MCF 10A (cell line): ENCODE measurements at regions of chr14 and their contacts with region 1.

Region 1: GRCh38 chr14:81170104-81170828 is 50.5 kb downstream of the GTF2A1 start:
- DNase-seq: peak; percentile 89
- H3K4me3 Mint-ChIP-seq: peak overlapping the region; percentile 80
- H3K27ac Mint-ChIP-seq: peak overlapping the region; percentile 78
- H3K4me1 Mint-ChIP-seq: peaks cover 15% of the 10 kb centered on the region
- H3K27me3 Mint-ChIP-seq: no peaks in the 10 kb centered on the region
- CTCF ChIP-seq: peak; percentile 66

Region 2: GRCh38 chr14:80954687-80955299 is 215.5 kb before region 1 on chr14:
- CTCF ChIA-PET with region 1: interaction called, 11 read pairs
- POLR2A ChIA-PET with region 1: no interaction called
- intact Hi-C with region 1: loop called (anchors 2 kb)
- DNase-seq: peak; percentile 75
- H3K4me3 Mint-ChIP-seq: peak overlapping the region; percentile 70
- H3K27ac Mint-ChIP-seq: no peak overlapping the region
- H3K4me1 Mint-ChIP-seq: no peaks in the 10 kb centered on the region
- H3K27me3 Mint-ChIP-seq: peaks cover 76% of the 10 kb centered on the region
- CTCF ChIP-seq: peak; percentile 76

Region 3: GRCh38 chr14:80987235-80988032 is 182.8 kb before region 1 on chr14:
- CTCF ChIA-PET with region 1: interaction called, 37 read pairs
- POLR2A ChIA-PET with region 1: interaction called, 6 read pairs
- intact Hi-C with region 1: no loop called
- DNase-seq: peak; percentile 83
- H3K4me3 Mint-ChIP-seq: no peak overlapping the region
- H3K27ac Mint-ChIP-seq: no peak overlapping the region
- H3K4me1 Mint-ChIP-seq: no peaks in the 10 kb centered on the region
- H3K27me3 Mint-ChIP-seq: peaks cover 21% of the 10 kb centered on the region
- CTCF ChIP-seq: peak; percentile 95

Region 4: DNA sequence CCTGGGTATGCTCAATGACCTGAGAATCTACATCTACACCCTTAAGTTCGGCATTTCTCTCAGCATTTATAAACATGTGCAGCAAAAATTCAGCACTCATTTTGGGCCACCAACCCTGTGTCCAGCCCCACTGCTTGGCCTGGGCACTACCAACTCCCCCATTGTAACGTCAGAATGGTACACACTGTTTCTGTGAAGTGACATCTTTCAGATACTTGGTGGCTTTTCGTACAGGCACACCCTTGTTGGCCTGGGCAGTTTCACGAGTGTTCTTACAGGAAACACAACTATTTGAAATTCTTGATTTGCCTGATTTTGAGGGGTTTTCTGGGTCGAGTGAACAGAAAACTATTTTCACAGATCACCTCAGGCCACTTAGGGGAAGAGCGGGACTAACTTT is 168.8 kb before region 1 on chr14:
- CTCF ChIA-PET with region 1: interaction called, 76 read pairs
- POLR2A ChIA-PET with region 1: interaction called, 17 read pairs
- intact Hi-C with region 1: loop called (anchors 1 kb)
- DNase-seq: no peak
- H3K4me3 Mint-ChIP-seq: no peak overlapping the region
- H3K27ac Mint-ChIP-seq: no peak overlapping the region
- H3K4me1 Mint-ChIP-seq: no peaks in the 10 kb centered on the region
- H3K27me3 Mint-ChIP-seq: peaks cover 43% of the 10 kb centered on the region
- CTCF ChIP-seq: no peak

Region 5: GRCh38 chr14:81157431-81157830 is 12.8 kb before region 1 on chr14:
- CTCF ChIA-PET with region 1: interaction called, 46 read pairs
- POLR2A ChIA-PET with region 1: no interaction called
- intact Hi-C with region 1: no loop called
- DNase-seq: no peak
- H3K4me3 Mint-ChIP-seq: no peak overlapping the region
- H3K27ac Mint-ChIP-seq: no peak overlapping the region
- H3K4me1 Mint-ChIP-seq: no peaks in the 10 kb centered on the region
- H3K27me3 Mint-ChIP-seq: no peaks in the 10 kb centered on the region
- CTCF ChIP-seq: no peak

Region 6: GRCh38 chr14:81220830-81221578 is 50.7 kb after region 1 on chr14 and contains the start of gene GTF2A1:
- CTCF ChIA-PET with region 1: no interaction called
- POLR2A ChIA-PET with region 1: interaction called, 12 read pairs
- intact Hi-C with region 1: no loop called
- DNase-seq: peak; percentile 94
- H3K4me3 Mint-ChIP-seq: peak within 1 kb of the TSS; percentile 93
- H3K27ac Mint-ChIP-seq: peak within 1 kb of the TSS; percentile 99
- H3K4me1 Mint-ChIP-seq: peaks cover 6% of the 10 kb centered on the region
- H3K27me3 Mint-ChIP-seq: no peaks in the 10 kb centered on the region
- CTCF ChIP-seq: no peak
- total RNA-seq, gene GTF2A1: 35.0 and 49.4 TPM in 2 replicates

Region 7: DNA sequence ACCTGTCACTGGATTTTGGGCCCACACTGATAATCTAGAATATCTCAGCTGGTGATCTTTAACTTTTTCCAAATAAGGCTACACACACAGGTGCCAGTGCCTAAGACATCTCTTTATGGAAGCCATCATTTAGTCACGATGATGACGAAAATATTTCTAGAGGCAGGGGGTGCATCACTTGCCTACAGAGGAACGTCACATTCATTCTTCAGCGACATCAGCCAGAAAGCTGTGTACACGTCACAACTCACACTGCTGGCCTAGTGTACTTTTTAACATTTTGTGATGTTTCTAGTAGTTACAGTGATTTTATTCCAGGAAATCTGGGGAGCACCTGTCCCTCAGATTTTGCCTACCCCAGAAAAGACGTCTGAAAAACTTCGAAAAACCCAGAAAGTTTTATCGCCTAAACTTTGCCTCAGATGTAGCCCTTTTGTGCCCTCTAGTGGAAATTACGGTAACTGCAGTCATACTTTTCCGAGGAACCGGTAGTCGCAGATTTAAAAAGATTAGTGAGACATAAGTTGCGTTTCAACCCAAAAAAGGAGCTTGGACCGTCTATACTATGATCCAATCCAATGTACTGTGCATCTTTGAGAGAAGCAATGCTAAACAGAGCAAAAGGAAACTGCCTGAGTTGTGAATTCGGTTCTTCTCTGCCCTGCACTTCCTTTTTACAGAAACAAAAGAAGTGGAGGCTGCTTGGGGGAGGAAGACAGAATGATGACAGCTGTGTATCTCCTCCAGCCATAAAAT is 294.2 kb after region 1 on chr14:
- CTCF ChIA-PET with region 1: interaction called, 14 read pairs
- POLR2A ChIA-PET with region 1: no interaction called
- intact Hi-C with region 1: loop called (anchors 1 kb)
- DNase-seq: peak; percentile 75
- H3K4me3 Mint-ChIP-seq: peak overlapping the region; percentile 40
- H3K27ac Mint-ChIP-seq: no peak overlapping the region
- H3K4me1 Mint-ChIP-seq: no peaks in the 10 kb centered on the region
- H3K27me3 Mint-ChIP-seq: no peaks in the 10 kb centered on the region
- CTCF ChIP-seq: peak; percentile 67